CD4-positive, alpha-beta memory T cell (primary cell): ENCODE measurements at regions of chr13 and their contacts with region 1.

Region 1: GRCh38 chr13:42110410-42111155 is 62.1 kb downstream of the DGKH start:
- DNase-seq: peak in 4 of 5 donors; percentile 63 to 68 (median 64)
- H3K4me3 ChIP-seq: no peak overlapping the region
- H3K4me3 Mint-ChIP-seq: peak overlapping the region in 1 of 8 donors; percentile 5
- H3K27ac ChIP-seq: no peak overlapping the region
- H3K27ac Mint-ChIP-seq: peak overlapping the region in 1 of 7 donors; percentile 24
- H3K4me1 ChIP-seq: peaks cover 6% of the 10 kb centered on the region
- H3K4me1 Mint-ChIP-seq: peaks cover 7 to 8% (median 7%) of the 10 kb centered on the region in 4 donors
- H3K27me3 ChIP-seq: no peaks in the 10 kb centered on the region
- H3K27me3 Mint-ChIP-seq: no peaks in the 10 kb centered on the region

Region 2: DNA sequence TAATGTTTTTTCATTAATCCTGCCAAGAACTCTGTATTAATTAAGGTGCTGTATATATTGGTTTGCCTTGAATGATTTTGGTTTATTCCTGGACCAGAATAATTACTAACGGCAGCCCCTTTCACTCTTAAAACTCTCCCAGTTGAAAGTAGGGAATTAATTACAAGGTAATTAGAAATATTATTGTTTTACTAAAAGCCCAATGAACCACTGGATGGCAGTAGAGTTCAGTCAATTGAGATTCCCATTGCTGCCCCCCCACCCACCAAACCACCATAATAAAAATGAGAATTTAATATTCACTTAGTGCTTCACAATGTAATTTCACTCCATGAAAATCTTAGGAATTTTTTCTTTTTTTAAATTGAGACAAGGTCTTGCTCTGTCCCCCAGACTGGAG is 1035.5 kb before region 1 on chr13:
- CTCF ChIA-PET with region 1: no interaction called
- POLR2A ChIA-PET with region 1: no interaction called
- intact Hi-C with region 1: loop called (anchors 5 kb)
- DNase-seq: peak in 4 of 5 donors; percentile 37 to 52 (median 44)
- H3K4me3 ChIP-seq: no peak overlapping the region
- H3K4me3 Mint-ChIP-seq: no peak overlapping the region
- H3K27ac ChIP-seq: no peak overlapping the region
- H3K27ac Mint-ChIP-seq: no peak overlapping the region
- H3K4me1 ChIP-seq: no peaks in the 10 kb centered on the region
- H3K4me1 Mint-ChIP-seq: no peaks in the 10 kb centered on the region
- H3K27me3 ChIP-seq: no peaks in the 10 kb centered on the region
- H3K27me3 Mint-ChIP-seq: no peaks in the 10 kb centered on the region

Region 3: DNA sequence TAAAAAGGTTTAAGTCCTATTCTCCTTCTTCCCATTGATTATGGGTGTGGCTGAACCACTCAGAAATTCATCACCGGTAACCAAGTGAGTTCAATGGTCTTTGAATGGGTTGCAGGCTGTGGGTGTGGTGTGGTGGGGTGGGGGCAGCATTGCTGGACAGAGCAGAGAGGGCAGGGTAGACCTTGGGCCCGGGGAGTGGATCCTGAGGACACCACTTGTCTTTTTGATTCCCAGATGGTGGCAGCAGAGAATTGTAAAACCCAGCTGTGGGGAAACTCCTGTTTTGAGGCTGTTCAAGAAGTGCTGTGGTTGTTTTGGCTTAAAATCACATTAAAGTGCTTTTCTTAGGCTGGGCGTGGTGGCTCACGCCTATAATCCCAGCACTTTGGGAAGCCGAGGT is 699.1 kb before region 1 on chr13:
- CTCF ChIA-PET with region 1: interaction called, 3 read pairs
- POLR2A ChIA-PET with region 1: no interaction called
- intact Hi-C with region 1: loop called (anchors 1 kb)
- DNase-seq: peak in 4 of 5 donors; percentile 29 to 42 (median 34)
- H3K4me3 ChIP-seq: no peak overlapping the region
- H3K4me3 Mint-ChIP-seq: peak overlapping the region in 1 of 8 donors; percentile 14
- H3K27ac ChIP-seq: no peak overlapping the region
- H3K27ac Mint-ChIP-seq: peak overlapping the region in 3 of 7 donors; percentile 25 to 80 (median 70)
- H3K4me1 ChIP-seq: no peaks in the 10 kb centered on the region
- H3K4me1 Mint-ChIP-seq: peaks cover 0 to 7% (median under 1%) of the 10 kb centered on the region in 4 donors
- H3K27me3 ChIP-seq: no peaks in the 10 kb centered on the region
- H3K27me3 Mint-ChIP-seq: no peaks in the 10 kb centered on the region

Region 4: DNA sequence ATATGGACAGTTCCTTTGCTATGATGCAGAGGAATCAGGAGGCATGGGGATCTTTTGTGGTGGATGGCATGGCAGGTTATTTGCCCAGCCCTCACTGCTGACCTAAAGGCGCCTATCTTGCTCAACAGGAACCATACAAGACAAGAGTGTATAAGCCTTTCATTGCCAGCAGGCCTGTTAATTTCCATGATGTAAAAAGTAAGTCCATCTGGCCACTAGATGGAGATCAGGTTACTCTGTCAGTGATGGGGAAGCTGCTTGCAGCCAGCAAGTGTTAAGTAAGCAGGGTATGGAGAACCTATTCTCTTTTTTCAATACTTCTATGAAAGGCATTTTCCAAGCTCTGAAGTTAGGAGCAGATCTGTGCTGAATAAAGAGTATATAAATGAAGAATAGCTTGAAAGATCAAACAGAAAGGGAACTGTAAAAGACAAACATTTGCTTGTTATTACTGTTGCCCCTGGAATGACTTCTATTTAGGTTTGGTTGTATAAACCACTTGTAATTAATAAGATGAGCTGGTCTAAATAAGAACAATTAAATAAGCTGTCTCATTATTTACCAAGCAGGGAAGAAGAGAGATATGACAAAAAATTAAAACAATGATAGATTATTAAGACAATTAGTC is 442.3 kb before region 1 on chr13:
- CTCF ChIA-PET with region 1: interaction called, 122 read pairs
- POLR2A ChIA-PET with region 1: no interaction called
- intact Hi-C with region 1: loop called (anchors 1 kb)
- DNase-seq: peak; percentile 34 to 56 (median 43)
- H3K4me3 ChIP-seq: no peak overlapping the region
- H3K4me3 Mint-ChIP-seq: no peak overlapping the region
- H3K27ac ChIP-seq: no peak overlapping the region
- H3K27ac Mint-ChIP-seq: peak overlapping the region in 1 of 7 donors; percentile 9
- H3K4me1 ChIP-seq: no peaks in the 10 kb centered on the region
- H3K4me1 Mint-ChIP-seq: no peaks in the 10 kb centered on the region
- H3K27me3 ChIP-seq: no peaks in the 10 kb centered on the region
- H3K27me3 Mint-ChIP-seq: no peaks in the 10 kb centered on the region

Region 5: DNA sequence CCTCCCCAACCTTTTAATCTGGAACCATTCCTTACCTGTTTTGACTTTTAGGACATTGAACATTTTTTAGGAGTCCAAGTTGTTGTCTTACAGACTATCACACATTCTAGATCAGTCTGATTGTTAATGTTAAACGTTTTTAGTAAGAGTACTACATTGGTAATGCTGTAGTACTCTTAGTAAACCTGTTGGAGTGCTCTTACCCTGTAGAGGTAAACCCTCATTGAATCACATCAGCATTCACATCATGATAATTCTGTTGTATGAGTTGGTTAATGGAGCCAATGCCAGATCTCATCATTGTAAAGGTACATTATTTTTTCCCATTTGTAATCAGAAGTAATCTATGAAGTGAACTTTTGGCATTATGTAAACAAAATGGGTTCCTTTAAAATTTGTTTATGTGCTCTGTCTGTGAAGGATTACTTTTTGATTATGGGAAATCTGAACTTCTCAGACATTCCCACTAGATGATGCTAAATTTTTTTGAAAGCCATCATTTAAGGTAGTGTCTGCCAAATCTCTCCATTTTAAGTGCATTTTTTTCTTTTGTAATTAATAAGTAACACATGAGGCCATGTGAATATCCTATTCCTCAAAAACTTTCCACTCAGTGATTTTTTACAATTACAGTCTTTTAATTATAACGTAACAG is 204.9 kb before region 1 on chr13:
- CTCF ChIA-PET with region 1: interaction called, 7 read pairs
- POLR2A ChIA-PET with region 1: no interaction called
- intact Hi-C with region 1: loop called (anchors 1 kb)
- DNase-seq: peak in 4 of 5 donors; percentile 37 to 46 (median 44)
- H3K4me3 ChIP-seq: no peak overlapping the region
- H3K4me3 Mint-ChIP-seq: no peak overlapping the region
- H3K27ac ChIP-seq: no peak overlapping the region
- H3K27ac Mint-ChIP-seq: peak overlapping the region in 1 of 7 donors; percentile 65
- H3K4me1 ChIP-seq: no peaks in the 10 kb centered on the region
- H3K4me1 Mint-ChIP-seq: peaks cover 4 to 12% (median 7%) of the 10 kb centered on the region in 4 donors
- H3K27me3 ChIP-seq: no peaks in the 10 kb centered on the region
- H3K27me3 Mint-ChIP-seq: no peaks in the 10 kb centered on the region

Region 6: GRCh38 chr13:42039946-42040729 is 70.4 kb before region 1 on chr13:
- CTCF ChIA-PET with region 1: no interaction called
- POLR2A ChIA-PET with region 1: no interaction called
- intact Hi-C with region 1: loop called (anchors 1 kb)
- DNase-seq: peak; percentile 84 to 87 (median 86)
- H3K4me3 ChIP-seq: peak overlapping the region; percentile 58 to 82
- H3K4me3 Mint-ChIP-seq: peak overlapping the region; percentile 84 to 94 (median 92)
- H3K27ac ChIP-seq: peak overlapping the region; percentile 65
- H3K27ac Mint-ChIP-seq: peak overlapping the region; percentile 86 to 95 (median 89)
- H3K4me1 ChIP-seq: peaks cover 13% of the 10 kb centered on the region
- H3K4me1 Mint-ChIP-seq: peaks cover 17 to 24% (median 19%) of the 10 kb centered on the region in 4 donors
- H3K27me3 ChIP-seq: no peaks in the 10 kb centered on the region
- H3K27me3 Mint-ChIP-seq: no peaks in the 10 kb centered on the region